Pancreas (tissue), 10 donors: ENCODE measurements at regions of chr3 and their contacts with region 1.

Region 1: DNA sequence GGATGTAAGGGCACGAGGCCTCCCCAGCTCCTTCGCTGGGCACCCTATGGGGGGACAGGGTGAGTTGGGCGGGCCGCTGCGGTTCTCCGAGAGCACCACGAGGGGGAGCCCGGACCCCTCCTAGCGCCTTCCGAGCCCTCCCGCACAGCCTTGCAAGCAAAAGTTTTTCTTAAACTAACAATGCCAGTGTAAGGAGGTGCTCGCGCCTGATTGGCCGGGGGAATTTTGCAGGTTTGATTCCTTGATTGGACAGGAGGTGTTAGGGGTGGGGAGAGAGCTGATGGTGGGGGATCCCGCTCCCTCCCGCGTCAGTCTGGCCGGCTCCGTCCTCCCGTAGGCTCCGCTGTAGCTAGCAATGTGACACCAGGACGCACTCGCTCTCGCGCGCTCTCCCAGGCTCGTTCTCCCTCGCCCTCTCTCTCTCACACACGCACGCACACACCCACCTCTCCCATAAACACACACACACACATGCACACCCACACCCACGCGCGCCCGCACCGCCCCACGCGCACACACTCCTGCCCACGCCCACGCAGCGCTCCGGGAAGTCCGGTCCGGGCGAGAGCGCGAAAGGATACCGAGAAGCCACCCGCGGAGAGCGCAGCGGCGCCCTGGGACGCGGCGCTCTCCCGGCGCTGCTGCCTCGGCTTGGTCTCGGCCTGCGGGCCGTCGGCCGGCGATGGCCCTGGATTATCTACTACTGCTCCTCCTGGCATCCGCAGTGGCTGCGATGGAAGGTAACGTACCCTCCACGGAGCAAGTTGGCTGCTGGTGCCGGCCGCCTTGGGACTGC is at the start of gene EPHB1:
- DNase-seq: peak; percentile 39 to 89 (median 68)
- ATAC-seq: peak; percentile 90 to 96 (median 94)
- H3K4me3 ChIP-seq: peak within 1 kb of the TSS; percentile 14 to 53 (median 34)
- H3K27ac ChIP-seq: no peak within 1 kb of the TSS
- H3K4me1 ChIP-seq: peaks cover 0 to 8% (median 4%) of the 10 kb centered on the region in 3 donors
- H3K27me3 ChIP-seq: peaks cover 0 to 6% (median 2%) of the 10 kb centered on the region in 4 donors
- CTCF ChIP-seq: peak; percentile 54 to 92 (median 82)
- total RNA-seq, gene EPHB1: 0.13 to 1.4 (median 0.43) TPM

Region 2: GRCh38 chr3:135887220-135887619 is 1092.1 kb after region 1 on chr3:
- intact Hi-C with region 1: loop called in 2 of 3 experiments (anchors 10 kb)
- DNase-seq: no peak
- ATAC-seq: no peak
- H3K4me3 ChIP-seq: no peak overlapping the region
- H3K27ac ChIP-seq: no peak overlapping the region
- H3K4me1 ChIP-seq: no peaks in the 10 kb centered on the region
- H3K27me3 ChIP-seq: no peaks in the 10 kb centered on the region
- CTCF ChIP-seq: no peak

Region 3: GRCh38 chr3:135895106-135895733 is 1100.1 kb after region 1 on chr3:
- intact Hi-C with region 1: loop called in 1 of 3 experiments (anchors 10 kb)
- DNase-seq: peak; percentile 32 to 86 (median 68)
- ATAC-seq: peak in 3 of 4 donors; percentile 78 to 87 (median 84)
- H3K4me3 ChIP-seq: no peak overlapping the region
- H3K27ac ChIP-seq: no peak overlapping the region
- H3K4me1 ChIP-seq: no peaks in the 10 kb centered on the region
- H3K27me3 ChIP-seq: no peaks in the 10 kb centered on the region
- CTCF ChIP-seq: peak; percentile 55 to 79 (median 70)